ENCODE measurements at regions of chr5 and their contacts with region 1.

Region 1: DNA sequence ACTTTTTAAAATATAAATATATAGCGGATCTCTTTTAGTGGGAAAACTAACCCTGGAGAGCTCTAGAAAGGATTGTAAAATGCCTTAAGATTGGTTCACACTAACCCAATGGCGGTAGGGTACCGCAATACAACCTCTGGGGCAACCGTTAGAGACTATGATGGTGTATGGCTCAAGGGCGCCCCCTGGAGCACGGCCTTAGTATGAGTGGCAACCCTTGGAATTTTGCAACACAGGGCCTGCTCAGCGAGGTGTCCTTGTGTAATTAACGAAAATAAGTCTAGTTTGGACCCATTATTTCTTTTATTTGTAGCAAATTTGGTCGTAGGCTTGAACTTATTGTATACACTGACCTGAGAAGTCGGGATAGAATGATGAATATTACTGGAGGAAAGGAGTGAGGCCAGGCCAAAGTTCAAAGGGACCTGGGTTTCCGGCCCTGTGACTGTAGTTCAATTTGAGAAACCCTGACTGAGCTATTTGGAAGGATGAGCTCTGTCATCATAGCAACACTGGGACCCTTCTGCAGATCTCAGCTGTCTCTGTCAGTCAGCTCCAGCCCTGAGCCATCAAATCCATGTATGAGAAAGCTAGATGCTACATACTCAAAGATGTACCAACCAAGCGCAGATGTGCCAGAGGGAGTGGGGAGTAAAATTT is 54.8 kb downstream of the CAMK4 start:
- DNase-seq: peak; percentile 33 to 72 (median 62)
- ATAC-seq: peak; percentile 72
- H3K4me3 ChIP-seq: no peak overlapping the region
- H3K27ac ChIP-seq: no peak overlapping the region
- H3K4me1 ChIP-seq: no peaks in the 10 kb centered on the region
- H3K27me3 ChIP-seq: no peaks in the 10 kb centered on the region
- CTCF ChIP-seq: peak; percentile 27 to 74 (median 56)
- POLR2A ChIP-seq: no peak

Region 2: DNA sequence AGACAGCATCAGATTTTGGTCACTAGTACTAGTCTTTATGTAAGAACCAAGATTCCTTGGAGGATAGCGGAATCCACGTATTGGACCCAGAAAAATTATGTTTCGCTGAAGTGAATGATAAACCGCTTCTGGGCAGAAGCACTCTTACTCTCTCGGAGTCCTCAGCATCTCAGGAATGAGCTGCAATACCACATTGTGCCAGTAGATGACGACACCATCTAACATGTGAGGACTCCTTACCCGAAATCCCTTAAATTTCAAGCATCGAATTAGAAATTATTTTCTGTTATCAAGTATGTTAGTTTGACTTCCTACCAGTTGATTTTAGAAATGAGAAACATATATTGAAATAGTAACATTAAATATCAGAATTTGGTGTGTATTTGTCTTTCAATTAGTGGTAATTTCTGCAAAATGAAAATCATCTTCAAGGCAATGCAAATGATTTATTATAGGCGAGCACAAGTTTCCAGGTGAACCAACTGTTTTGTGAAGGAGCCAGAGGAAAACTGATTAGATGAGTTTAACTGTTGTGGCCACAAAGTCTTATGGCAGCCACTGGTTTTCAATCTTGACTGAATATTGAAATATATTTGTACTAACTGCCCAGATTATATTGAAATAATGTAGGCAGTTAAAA is 120.8 kb before region 1 on chr5:
- intact Hi-C with region 1: loop called (anchors 10 kb)
- DNase-seq: peak; percentile 67 to 84 (median 76)
- ATAC-seq: peak; percentile 78
- H3K4me3 ChIP-seq: no peak overlapping the region
- H3K27ac ChIP-seq: no peak overlapping the region
- H3K4me1 ChIP-seq: no peaks in the 10 kb centered on the region
- H3K27me3 ChIP-seq: no peaks in the 10 kb centered on the region
- CTCF ChIP-seq: peak; percentile 85 to 99 (median 96)
- POLR2A ChIP-seq: no peak

Region 3: GRCh38 chr5:111411301-111411700 is 132.3 kb after region 1 on chr5:
- intact Hi-C with region 1: no loop called
- DNase-seq: no peak
- ATAC-seq: no peak
- H3K4me3 ChIP-seq: no peak overlapping the region
- H3K27ac ChIP-seq: no peak overlapping the region
- H3K4me1 ChIP-seq: no peaks in the 10 kb centered on the region
- H3K27me3 ChIP-seq: no peaks in the 10 kb centered on the region
- CTCF ChIP-seq: no peak
- POLR2A ChIP-seq: no peak